Dendritic cell treated with granulocyte-macrophage colony-stimulating factor and Interleukin-4, amounts not matched to agents 40 ng/mL and 50 ng/mL, for 4 days (primary cell): ENCODE measurements at regions of chr2 and their contacts with region 1.

Region 1: GRCh38 chr2:64865073-64865830 is 123.9 kb upstream of the SLC1A4 start:
- H3K4me3 Mint-ChIP-seq: peak overlapping the region; percentile 68
- H3K27ac Mint-ChIP-seq: no peak overlapping the region
- H3K4me1 Mint-ChIP-seq: no peaks in the 10 kb centered on the region
- H3K27me3 Mint-ChIP-seq: peaks cover 3% of the 10 kb centered on the region

Region 2: DNA sequence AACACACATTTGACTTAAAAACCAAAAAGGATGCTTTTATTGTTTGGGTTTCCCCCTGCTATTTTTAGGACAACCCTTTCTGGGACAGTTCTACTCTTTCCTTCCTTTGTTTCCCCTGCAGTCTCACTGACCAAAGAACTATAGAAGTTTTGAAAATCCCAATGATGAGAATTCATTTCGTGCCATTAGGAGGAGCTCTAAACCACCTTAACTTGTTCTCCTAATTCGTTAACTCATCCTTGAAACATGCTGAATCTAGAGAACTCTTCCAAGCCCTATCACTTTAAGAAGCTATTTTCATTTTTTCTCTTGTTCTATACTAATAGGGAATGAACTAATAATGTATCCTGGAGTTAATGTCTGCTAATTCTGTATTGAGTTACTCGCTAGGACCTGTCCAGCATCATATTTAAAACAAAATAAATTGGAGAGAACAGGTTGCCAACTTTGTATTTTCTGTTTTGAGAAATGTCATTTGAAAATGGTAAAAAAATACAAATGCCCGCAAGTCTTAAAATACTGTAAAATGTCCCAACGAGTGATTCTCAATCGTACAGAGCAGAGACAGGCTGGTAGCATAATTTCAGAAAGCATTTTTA is 278.3 kb before region 1 on chr2:
- intact Hi-C with region 1: loop called (anchors 2 kb)
- H3K4me3 Mint-ChIP-seq: no peak overlapping the region
- H3K27ac Mint-ChIP-seq: no peak overlapping the region
- H3K4me1 Mint-ChIP-seq: peaks cover 13% of the 10 kb centered on the region
- H3K27me3 Mint-ChIP-seq: no peaks in the 10 kb centered on the region

Region 3: GRCh38 chr2:64644177-64645004 is 220.9 kb before region 1 on chr2:
- intact Hi-C with region 1: loop called (anchors 2 kb)
- H3K4me3 Mint-ChIP-seq: peak overlapping the region; percentile 91
- H3K27ac Mint-ChIP-seq: peak overlapping the region; percentile 98
- H3K4me1 Mint-ChIP-seq: peaks cover 64% of the 10 kb centered on the region
- H3K27me3 Mint-ChIP-seq: no peaks in the 10 kb centered on the region